SK-N-SH (cell line): ENCODE measurements at regions of chr10 and their contacts with region 1.

Region 1: DNA sequence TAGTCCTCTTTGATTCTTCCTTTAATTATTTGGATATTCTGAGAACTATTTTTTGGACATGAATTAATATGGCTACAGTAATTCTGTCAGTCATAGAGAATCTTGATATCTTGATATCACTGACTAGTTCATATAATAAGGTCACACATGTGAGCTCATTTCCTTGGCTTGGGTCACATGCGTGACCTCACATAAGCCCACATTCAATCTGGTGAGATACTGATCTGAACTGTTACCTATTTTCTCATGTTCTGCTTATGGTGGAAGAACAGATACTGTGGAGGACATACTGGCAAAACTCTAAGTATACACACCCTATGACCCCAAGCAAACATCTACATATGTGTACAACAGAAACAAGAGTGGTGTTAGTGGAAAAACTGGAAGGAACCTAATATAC is 44.1 kb downstream of the CUL2 start:
- DNase-seq: no peak
- H3K4me3 ChIP-seq: no peak overlapping the region
- H3K27ac ChIP-seq: no peak overlapping the region
- H3K4me1 ChIP-seq: peaks cover 0 to 10% of the 10 kb centered on the region in 2 experiments; a peak in 2 of 4 replicates
- H3K27me3 ChIP-seq: no peaks in the 10 kb centered on the region
- CTCF ChIP-seq: no peak
- EP300 ChIP-seq: no peak
- RAD21 ChIP-seq: no peak

Region 2: GRCh38 chr10:35027567-35027966 is 18.5 kb before region 1 on chr10:
- CTCF ChIA-PET with region 1: interaction called, 10 read pairs
- POLR2A ChIA-PET with region 1: no interaction called
- DNase-seq: peak; percentile 32
- H3K4me3 ChIP-seq: no peak overlapping the region
- H3K27ac ChIP-seq: peak overlapping the region in 1 of 2 experiments; percentile 31; a peak in 1 of 4 replicates
- H3K4me1 ChIP-seq: no peaks in the 10 kb centered on the region; a peak in 1 of 4 replicates
- H3K27me3 ChIP-seq: no peaks in the 10 kb centered on the region
- CTCF ChIP-seq: peak; percentile 73
- EP300 ChIP-seq: no peak
- RAD21 ChIP-seq: peak; percentile 49